Activated CD4-positive, alpha-beta T cell treated with anti-CD3 and anti-CD28 coated beads, Interleukin-2, amount 10 ng/mL, durations not matched to agents 24 days and 14 days (primary cell): ENCODE measurements at regions of chr19 and their contacts with region 1.

Region 1: DNA sequence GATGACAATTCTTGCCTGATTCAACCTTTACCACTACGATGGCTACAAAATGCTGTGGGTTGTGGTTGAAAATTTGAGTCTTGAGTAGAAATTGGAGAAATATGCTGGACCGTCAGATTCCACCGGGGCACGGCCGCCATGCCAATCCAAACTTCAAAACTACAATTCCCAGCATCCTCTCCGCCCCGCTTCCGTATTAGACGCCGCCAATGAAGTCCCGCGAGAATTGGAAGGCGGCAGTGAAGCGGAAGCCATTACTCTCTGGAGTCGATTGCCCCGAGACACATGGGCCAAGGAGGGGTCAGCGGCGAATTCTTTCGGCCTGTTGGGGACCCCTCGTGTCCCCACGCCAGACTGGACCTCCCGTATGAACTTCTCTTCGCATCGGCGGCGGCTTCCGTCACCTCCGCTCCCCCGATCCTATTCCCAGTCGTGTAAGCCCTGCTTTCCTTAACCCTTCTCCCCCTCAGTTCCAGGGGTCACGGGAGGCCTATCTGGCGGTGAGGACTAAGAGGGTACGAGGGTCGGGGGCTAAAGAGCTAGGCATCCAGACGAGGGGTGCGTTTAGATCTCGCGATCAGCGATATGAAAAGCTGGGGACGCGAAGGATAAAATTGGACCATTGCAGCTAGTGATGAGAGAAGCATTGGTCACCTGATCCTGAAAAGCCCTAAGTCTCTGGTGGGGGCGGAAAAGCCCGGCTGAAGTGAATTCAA is at the start of gene ZNF317:
- DNase-seq: peak; percentile 97
- H3K4me3 Mint-ChIP-seq: peak within 1 kb of the TSS; percentile 97
- H3K27ac Mint-ChIP-seq: peak within 1 kb of the TSS; percentile 97
- H3K4me1 Mint-ChIP-seq: peaks cover 24% of the 10 kb centered on the region
- H3K27me3 Mint-ChIP-seq: no peaks in the 10 kb centered on the region
- total RNA-seq, gene ZNF317: 47.1 and 50.2 TPM in 2 replicates

Region 2: DNA sequence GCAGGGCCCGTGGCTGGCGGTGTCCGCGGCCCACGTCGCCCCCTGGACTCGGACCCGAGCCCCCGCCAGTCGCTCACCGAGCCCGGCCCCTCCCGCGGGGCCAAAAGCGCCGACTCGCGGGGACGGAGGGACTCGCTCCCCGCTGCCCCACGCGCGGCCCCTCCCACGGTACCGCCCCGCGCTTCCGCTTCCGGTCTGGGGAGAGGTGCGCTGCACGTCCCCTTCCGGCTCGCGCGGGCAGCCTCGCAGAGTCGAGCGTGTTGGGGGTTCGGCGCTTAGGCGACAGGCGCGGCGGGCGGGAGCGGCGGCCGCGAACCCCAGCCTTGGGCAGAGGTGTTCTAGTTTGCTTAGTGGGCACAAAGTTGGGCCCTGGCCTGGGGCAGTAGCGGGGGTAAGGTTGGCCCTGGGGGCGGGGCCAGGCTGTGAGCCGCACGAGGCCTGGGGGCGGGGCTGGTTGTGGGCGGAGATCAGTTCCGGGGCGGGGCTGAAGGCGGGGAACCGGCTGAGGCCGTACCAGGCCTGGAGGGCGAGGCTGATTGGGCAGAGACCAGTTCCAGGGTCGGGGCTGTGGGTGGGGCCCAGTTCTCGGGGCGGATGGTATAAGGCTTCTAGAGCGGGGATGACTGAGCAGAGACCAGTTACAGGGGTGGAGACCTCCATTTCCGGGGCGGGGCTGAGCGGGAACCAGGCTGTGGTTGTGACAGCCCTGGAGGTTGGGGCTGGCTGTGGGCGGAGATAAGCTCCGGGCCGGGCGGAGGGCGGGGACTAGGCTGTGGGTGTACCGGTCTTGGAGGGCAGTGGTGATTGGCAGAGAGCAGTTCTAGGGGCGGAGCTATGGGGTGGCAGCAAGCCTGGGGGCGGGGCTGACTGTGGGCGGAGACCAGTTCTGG is 307.9 kb before region 1 on chr19 and contains the starts of genes MBD3L1 and ZNF558:
- intact Hi-C with region 1: loop called (anchors 1 kb)
- DNase-seq: peak; percentile 99
- H3K4me3 Mint-ChIP-seq: peak within 1 kb of the TSS; percentile 90
- H3K27ac Mint-ChIP-seq: peak within 1 kb of the TSS; percentile 97
- H3K4me1 Mint-ChIP-seq: peaks cover 15% of the 10 kb centered on the region
- H3K27me3 Mint-ChIP-seq: peaks cover 2% of the 10 kb centered on the region
- total RNA-seq, gene MBD3L1: not detected in 2 replicates
- total RNA-seq, gene ZNF558: 25.1 and 26.4 TPM in 2 replicates

Region 3: GRCh38 chr19:9309139-9309973 is 169.0 kb after region 1 on chr19 and contains the start of gene ZNF699:
- intact Hi-C with region 1: loop called (anchors 2 kb)
- DNase-seq: peak; percentile 99
- H3K4me3 Mint-ChIP-seq: peak within 1 kb of the TSS; percentile 96
- H3K27ac Mint-ChIP-seq: peak within 1 kb of the TSS; percentile 94
- H3K4me1 Mint-ChIP-seq: peaks cover 14% of the 10 kb centered on the region
- H3K27me3 Mint-ChIP-seq: no peaks in the 10 kb centered on the region
- total RNA-seq, gene ZNF699: 4.4 and 4.5 TPM in 2 replicates

Region 4: GRCh38 chr19:9584073-9584833 is 443.9 kb after region 1 on chr19 and contains the start of gene ZNF121:
- intact Hi-C with region 1: loop called (anchors 1 kb)
- DNase-seq: peak; percentile 95
- H3K4me3 Mint-ChIP-seq: peak within 1 kb of the TSS; percentile 93
- H3K27ac Mint-ChIP-seq: peak within 1 kb of the TSS; percentile 95
- H3K4me1 Mint-ChIP-seq: peaks cover 13% of the 10 kb centered on the region
- H3K27me3 Mint-ChIP-seq: peaks cover 2% of the 10 kb centered on the region
- total RNA-seq, gene ZNF121: 63.9 and 69.4 TPM in 2 replicates

Region 5: DNA sequence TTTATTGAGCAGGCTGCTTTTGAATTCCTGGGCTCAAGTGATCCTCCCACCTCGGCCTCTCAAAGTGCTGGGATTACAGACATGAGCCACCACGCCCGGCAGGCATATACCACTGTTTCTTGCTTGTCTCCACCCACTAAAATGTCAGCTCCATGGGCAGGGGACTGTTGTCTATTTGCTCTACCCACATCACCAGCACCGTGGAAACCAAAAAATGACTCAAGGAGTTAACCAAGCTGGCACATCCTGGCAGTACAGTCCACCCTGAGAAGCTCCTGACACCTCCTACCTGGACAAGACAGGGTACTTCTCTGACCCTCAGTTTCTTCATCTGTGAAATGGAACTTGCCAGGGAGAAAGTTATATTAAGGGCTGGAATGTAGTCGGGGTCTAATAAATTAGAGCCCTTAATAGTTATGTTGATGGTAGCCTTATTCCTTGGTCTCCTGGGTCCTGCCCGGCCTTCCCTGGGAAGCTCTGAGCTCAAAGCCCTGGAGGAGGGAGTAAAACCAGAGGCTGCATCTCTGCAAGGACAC is 886.9 kb after region 1 on chr19:
- intact Hi-C with region 1: loop called (anchors 5 kb)
- DNase-seq: no peak
- H3K4me3 Mint-ChIP-seq: no peak overlapping the region
- H3K27ac Mint-ChIP-seq: no peak overlapping the region
- H3K4me1 Mint-ChIP-seq: peaks cover 3% of the 10 kb centered on the region
- H3K27me3 Mint-ChIP-seq: peaks cover 13% of the 10 kb centered on the region